ENCODE measurements at regions of chr10 and their contacts with region 1.

Region 1: GRCh38 chr10:29443745-29444523 is 155.1 kb downstream of the LYZL1 start:
- DNase-seq: no peak
- H3K4me3 ChIP-seq: no peak overlapping the region
- H3K27ac ChIP-seq: no peak overlapping the region
- H3K4me1 ChIP-seq: no peaks in the 10 kb centered on the region
- H3K27me3 ChIP-seq: no peaks in the 10 kb centered on the region
- CTCF ChIP-seq: no peak
- POLR2A ChIP-seq: no peak

Region 2: GRCh38 chr10:29377333-29377961 is 66.5 kb before region 1 on chr10:
- CTCF ChIA-PET with region 1: interaction called, 9 read pairs
- POLR2A ChIA-PET with region 1: no interaction called
- dilution Hi-C with region 1: no loop called
- intact Hi-C with region 1: loop called (anchors 1 kb)
- DNase-seq: peak; percentile 30
- H3K4me3 ChIP-seq: no peak overlapping the region
- H3K27ac ChIP-seq: no peak overlapping the region
- H3K4me1 ChIP-seq: no peaks in the 10 kb centered on the region
- H3K27me3 ChIP-seq: peaks cover 2 to 3% of the 10 kb centered on the region in 2 experiments
- CTCF ChIP-seq: peak; percentile 37 to 64
- POLR2A ChIP-seq: no peak

Region 3: GRCh38 chr10:29386342-29386999 is 57.5 kb before region 1 on chr10:
- CTCF ChIA-PET with region 1: interaction called, 4 read pairs
- POLR2A ChIA-PET with region 1: no interaction called
- dilution Hi-C with region 1: no loop called
- intact Hi-C with region 1: loop called (anchors 1 kb)
- DNase-seq: peak; percentile 43
- H3K4me3 ChIP-seq: no peak overlapping the region
- H3K27ac ChIP-seq: no peak overlapping the region
- H3K4me1 ChIP-seq: peaks cover 4% of the 10 kb centered on the region
- H3K27me3 ChIP-seq: peaks cover 3 to 15% of the 10 kb centered on the region in 2 experiments
- CTCF ChIP-seq: peak; percentile 40 to 50
- POLR2A ChIP-seq: no peak

Measured in endothelial cell of umbilical vein (primary cell).